ENCODE measurements at regions of chr16 and their contacts with region 1.

Region 1: DNA sequence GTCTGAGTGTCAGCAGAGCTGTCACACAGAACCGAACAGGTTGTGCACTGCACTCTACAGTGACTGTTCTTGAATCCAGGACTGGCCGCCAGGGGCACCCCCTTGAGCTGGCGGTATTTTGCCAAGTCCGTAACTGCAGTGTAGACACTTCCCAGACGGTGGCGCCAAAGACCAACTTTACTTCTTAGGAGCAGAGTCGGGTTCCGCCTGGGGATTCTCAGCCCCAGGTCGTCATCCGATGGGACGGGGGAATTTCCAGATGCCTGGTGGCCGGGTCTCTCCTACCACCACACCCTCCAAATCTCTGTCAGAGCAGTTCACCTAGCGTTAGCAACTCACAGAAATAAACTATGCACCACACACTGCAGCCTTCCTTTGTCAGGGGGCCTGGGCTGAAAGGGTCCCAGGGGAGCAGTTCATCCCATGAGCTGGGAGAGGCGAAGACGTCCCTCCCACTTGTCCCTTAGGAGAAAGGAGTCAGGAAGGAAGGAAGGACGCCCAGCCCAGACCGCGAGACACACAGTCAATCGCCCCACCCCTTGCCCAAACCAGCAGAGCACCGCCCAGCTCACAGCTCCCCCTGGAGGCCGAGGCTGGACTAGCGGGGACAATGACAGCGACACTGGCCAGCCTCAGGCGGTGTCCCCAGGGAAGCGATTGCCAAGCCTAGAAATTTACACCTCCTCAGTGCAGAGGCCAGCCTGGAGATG is 7.4 kb upstream of the RIPOR1 start:
- H3K4me3 ChIP-seq: peak overlapping the region; percentile 38
- H3K27ac ChIP-seq: peak overlapping the region; percentile 5; the same call in 1 of the 2 replicates
- H3K4me1 ChIP-seq: no peaks in the 10 kb centered on the region
- CTCF ChIP-seq: peak; percentile 91

Region 2: GRCh38 chr16:67499106-67499505 is 22.1 kb before region 1 on chr16:
- CTCF ChIA-PET with region 1: interaction called, 92 read pairs
- POLR2A ChIA-PET with region 1: no interaction called
- H3K4me3 ChIP-seq: no peak overlapping the region
- H3K27ac ChIP-seq: no peak overlapping the region
- H3K4me1 ChIP-seq: no peaks in the 10 kb centered on the region
- CTCF ChIP-seq: no peak

Region 3: GRCh38 chr16:67546761-67547422 is 25.6 kb after region 1 on chr16:
- CTCF ChIA-PET with region 1: interaction called, 47 read pairs
- POLR2A ChIA-PET with region 1: interaction called, 4 read pairs
- H3K4me3 ChIP-seq: no peak overlapping the region
- H3K27ac ChIP-seq: no peak overlapping the region
- H3K4me1 ChIP-seq: no peaks in the 10 kb centered on the region
- CTCF ChIP-seq: peak; percentile 98

Region 4: GRCh38 chr16:67613808-67614207 is 92.6 kb after region 1 on chr16:
- CTCF ChIA-PET with region 1: interaction called, 11 read pairs
- POLR2A ChIA-PET with region 1: no interaction called
- H3K4me3 ChIP-seq: no peak overlapping the region
- H3K27ac ChIP-seq: no peak overlapping the region
- H3K4me1 ChIP-seq: no peaks in the 10 kb centered on the region
- CTCF ChIP-seq: no peak

Region 5: GRCh38 chr16:67660564-67661028 is 139.3 kb after region 1 on chr16 and contains the start of gene PARD6A:
- CTCF ChIA-PET with region 1: interaction called, 11 read pairs
- POLR2A ChIA-PET with region 1: interaction called, 6 read pairs
- H3K4me3 ChIP-seq: peak within 1 kb of the TSS; percentile 78
- H3K27ac ChIP-seq: peak within 1 kb of the TSS; percentile 75
- H3K4me1 ChIP-seq: 0 out of 2 replicates have a peak, but pooled peaks cover 4% of the 10 kb centered on the region
- CTCF ChIP-seq: no peak